ENCODE measurements at regions of chr5 and their contacts with region 1.

Region 1: DNA sequence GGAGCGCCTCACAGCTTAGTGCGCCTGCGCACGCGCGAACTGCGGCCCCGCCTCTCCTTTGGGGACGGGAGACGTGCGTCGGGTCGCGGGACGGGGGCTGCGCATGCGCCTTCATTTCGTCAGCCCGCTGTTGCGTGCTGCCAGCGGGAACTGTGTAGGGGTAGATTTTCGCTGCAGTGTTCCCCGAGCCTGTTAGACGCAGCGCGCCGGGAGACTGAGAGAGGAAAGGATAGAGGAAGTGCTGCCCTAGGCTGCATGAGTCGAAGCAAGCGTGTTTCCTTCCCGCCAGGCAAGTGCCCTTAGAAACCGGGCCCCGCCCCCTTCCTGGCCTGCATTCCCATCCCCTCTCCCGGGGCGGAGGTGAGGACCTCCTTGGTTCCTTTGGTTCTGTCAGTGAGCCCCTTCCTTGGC is 12.3 kb downstream of the ITGA1 start:
- DNase-seq: peak; percentile 96
- ATAC-seq: peak; percentile 90
- H3K4me3 Mint-ChIP-seq: peak overlapping the region; percentile 97
- H3K27ac Mint-ChIP-seq: peak overlapping the region; percentile 97
- H3K4me1 Mint-ChIP-seq: peaks cover 44% of the 10 kb centered on the region
- H3K27me3 Mint-ChIP-seq: no peaks in the 10 kb centered on the region
- CTCF ChIP-seq: no peak

Region 2: DNA sequence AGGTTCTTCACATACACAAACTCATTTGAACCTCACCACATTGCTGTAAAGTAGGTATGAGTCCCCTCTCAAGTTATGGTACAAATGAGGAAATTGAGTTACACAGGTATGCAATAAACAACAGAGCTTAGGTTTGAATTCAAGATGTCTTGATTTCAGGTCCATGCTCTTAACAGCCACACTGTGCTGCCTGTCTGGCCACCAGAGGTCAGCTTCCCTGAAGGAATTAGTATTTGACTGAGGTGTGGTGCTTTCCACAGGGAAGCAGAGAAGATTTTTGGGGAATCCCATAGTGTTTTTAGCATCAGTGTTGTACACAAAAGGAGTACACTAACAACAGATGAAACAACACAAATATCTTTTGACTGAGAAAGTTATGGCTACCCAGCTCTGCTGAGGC is 106.7 kb before region 1 on chr5:
- CTCF ChIA-PET with region 1: interaction called, 10 read pairs
- POLR2A ChIA-PET with region 1: no interaction called
- intact Hi-C with region 1: no loop called
- DNase-seq: peak; percentile 50
- ATAC-seq: no peak
- H3K4me3 Mint-ChIP-seq: no peak overlapping the region
- H3K27ac Mint-ChIP-seq: no peak overlapping the region
- H3K4me1 Mint-ChIP-seq: peaks cover 7% of the 10 kb centered on the region
- H3K27me3 Mint-ChIP-seq: no peaks in the 10 kb centered on the region
- CTCF ChIP-seq: peak; percentile 36

Region 3: DNA sequence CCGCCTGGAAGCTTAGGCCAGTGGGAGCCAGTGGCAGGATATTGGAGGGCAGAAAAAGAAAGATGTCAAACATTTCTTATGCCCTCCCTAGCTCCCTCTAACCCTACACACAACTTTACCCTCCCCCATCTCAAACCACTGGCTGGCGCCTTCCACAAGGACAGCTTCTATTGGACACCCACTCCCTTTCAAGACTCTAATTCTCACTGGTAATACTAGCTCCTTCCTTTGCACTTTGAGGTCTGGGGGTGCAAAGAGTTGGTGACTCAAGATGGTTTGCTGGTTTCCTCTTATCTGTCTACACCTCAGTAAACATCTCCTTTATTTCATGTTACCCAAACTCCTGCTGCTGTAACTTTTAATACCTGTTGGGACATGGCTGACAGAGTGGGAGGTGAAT is 23.9 kb before region 1 on chr5:
- CTCF ChIA-PET with region 1: interaction called, 8 read pairs
- POLR2A ChIA-PET with region 1: interaction called, 16 read pairs
- intact Hi-C with region 1: no loop called
- DNase-seq: peak; percentile 67
- ATAC-seq: peak; percentile 74
- H3K4me3 Mint-ChIP-seq: peak overlapping the region; percentile 14
- H3K27ac Mint-ChIP-seq: peak overlapping the region; percentile 85
- H3K4me1 Mint-ChIP-seq: peaks cover 47% of the 10 kb centered on the region
- H3K27me3 Mint-ChIP-seq: no peaks in the 10 kb centered on the region
- CTCF ChIP-seq: no peak

Region 4: DNA sequence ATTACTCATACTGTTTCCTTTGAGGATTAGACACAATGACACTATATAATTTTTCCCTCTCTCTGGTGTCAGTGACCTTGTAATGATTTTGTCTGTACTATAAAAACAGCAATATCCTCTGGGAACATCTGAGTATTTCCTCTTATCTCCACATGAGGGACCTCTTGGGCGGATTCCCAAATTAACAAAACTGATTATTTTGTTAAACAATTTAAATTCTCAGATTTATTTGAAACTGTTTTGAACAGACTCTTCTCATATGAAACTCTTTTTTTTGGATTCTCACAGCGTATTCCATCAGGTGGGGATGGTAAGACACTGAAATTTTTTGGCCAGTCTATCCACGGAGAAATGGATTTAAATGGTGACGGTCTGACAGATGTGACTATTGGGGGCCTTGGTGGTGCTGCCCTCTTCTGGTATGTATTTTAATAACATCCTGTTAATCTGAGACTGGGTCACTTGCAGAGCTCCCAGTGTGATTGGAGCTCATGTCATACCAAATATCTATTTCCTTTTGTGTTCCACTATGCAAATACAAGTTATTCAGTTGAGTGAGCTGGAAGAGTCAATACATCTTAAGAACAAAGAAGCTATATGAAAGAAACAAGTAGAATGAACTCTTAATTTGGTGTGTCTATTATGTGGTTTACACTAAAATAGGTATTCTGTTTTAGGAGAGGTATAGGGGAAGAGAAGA is 115.3 kb after region 1 on chr5:
- CTCF ChIA-PET with region 1: interaction called, 13 read pairs
- POLR2A ChIA-PET with region 1: interaction called, 3 read pairs
- intact Hi-C with region 1: no loop called
- DNase-seq: peak; percentile 62
- ATAC-seq: peak; percentile 98
- H3K4me3 Mint-ChIP-seq: peak overlapping the region; percentile 55
- H3K27ac Mint-ChIP-seq: no peak overlapping the region
- H3K4me1 Mint-ChIP-seq: peaks cover 7% of the 10 kb centered on the region
- H3K27me3 Mint-ChIP-seq: no peaks in the 10 kb centered on the region
- CTCF ChIP-seq: peak; percentile 88

Measured in activated CD8-positive, alpha-beta T cell treated with anti-CD3 and anti-CD28 coated beads for 36 hours (primary cell).